Cardiac septum (tissue), 1 donor: ENCODE measurements at regions of chr17 and their contacts with region 1.

Region 1: DNA sequence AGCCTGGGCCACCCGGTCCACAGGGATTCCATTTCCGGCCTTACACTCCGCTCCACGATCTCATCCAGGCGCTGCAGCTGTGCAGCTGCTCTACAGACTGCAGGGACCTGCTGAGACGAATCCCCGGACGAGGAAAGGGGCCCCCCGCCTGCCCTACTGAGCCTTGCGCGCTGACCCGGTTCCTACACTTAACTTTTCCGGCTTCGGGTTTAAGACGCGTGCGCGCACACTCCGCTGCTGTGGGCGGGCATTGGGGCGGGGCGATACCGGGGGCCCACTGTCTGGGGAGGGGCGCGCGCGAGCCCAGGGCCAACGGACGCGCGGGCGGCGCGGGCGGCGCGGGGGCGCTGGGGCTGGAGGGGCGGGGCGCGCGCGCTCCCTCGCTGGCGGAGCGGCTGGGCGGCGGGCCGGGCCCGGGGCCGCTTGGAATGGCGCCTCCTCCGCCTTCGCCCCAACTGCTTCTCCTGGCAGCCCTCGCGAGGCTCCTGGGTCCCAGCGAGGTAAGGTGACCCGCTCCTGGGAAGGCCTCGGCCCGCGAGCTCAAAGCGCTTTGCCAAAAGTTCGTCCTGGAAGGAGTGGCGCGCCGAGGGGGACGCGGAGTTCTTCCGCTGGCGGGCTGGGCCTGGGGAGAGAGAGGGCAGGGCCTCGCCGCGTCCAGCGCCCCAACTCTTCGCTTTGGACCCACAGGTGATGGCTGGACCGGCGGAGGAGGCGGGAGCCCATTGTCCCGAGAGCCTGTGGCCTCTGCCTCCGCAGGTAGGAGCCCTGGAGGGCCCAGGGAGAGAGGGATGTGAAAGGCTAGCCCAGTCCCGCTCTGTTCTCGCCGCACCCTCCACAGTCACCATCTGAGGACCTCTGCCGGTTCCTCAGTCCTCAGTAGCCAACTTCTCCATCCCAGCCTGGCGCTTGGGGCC is at the start of gene TP53I13:
- DNase-seq: peak; percentile 93
- total RNA-seq, gene TP53I13: 31.9 TPM

Region 2: DNA sequence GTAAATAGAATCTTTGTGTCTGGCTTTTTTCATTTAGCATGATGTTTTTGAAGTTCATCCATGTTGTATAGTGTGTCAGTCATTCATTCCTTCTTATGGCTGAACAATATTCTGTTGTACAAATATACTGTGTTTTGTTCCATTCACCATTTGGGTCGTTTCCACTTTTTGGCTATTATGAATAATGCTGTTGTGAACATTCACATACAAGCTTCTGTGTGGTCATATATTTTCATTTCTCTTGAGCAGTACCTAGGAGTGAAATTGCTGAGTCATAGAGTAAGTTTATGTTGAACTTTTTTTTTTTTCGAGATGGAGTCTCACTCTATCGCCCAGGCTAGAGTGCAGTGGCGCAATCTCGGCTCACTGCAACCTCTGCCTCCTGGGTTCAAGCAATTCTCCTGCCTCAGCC is 210.8 kb before region 1 on chr17:
- intact Hi-C with region 1: no loop called
- DNase-seq: no peak

Region 3: DNA sequence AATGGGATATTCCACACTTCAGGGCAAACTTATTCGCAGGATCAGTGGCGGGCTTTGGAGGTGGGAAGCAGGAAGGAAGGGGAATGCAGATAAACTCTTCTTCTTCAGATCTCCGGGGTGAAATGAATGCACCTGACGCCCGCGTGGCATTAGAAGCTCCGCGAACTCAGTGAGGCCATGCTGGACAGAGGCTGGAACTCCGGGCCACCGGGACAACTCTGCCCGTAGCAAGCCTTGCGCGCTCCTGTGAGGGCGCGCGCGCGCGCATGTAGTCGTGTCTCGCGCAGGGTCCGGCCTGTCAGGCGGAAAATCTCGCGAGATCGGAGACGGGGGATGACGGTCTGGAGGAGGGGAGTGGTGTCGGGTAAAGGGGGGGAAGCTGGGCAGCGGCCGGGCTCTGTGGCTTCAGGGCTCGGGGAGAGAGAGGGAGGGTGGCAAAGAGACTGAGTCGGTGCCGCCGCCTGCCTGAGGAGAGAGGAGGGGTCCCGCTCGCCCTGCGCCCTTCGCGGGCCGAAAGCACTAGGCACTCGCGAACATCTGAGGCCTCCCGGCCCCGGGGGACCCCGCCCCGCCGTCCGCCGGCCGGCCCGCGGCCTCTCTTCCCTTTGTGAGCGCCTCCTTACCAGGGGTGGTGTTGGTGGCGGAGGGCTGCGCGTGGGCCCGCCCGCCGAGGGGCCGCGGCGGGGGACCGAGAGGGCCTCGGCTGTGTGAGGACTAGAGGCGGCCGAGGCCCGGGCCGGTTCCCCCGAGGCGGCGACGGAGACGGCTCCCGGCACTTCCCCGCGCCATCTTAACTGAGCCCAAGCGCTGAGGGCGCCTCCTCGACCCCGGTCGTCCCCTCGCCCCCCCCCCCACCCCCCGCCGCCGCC is 178.4 kb before region 1 on chr17 and contains the start of gene TAOK1:
- intact Hi-C with region 1: loop called (anchors 10 kb)
- DNase-seq: peak; percentile 100
- total RNA-seq, gene TAOK1: 64.8 TPM

Region 4: DNA sequence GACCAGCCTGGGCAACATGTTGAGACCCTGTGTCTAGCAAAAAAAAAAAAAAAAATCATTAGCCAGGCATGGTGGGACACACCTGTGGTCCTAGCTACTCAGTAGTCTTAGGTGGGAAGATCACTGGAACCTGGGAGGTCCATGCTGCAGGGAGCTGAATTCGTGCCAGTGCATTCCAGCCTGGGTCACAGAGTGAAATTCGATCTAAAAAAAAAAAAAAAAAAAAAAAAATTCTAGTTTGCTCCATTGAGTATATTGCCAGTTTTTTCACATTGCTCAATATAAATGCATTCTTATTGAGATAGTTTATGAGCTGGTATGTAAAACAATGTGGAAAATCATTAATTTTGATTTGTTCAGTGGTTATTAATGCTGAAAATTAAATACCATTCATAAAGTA is 53.8 kb before region 1 on chr17:
- intact Hi-C with region 1: no loop called
- DNase-seq: no peak

Region 5: DNA sequence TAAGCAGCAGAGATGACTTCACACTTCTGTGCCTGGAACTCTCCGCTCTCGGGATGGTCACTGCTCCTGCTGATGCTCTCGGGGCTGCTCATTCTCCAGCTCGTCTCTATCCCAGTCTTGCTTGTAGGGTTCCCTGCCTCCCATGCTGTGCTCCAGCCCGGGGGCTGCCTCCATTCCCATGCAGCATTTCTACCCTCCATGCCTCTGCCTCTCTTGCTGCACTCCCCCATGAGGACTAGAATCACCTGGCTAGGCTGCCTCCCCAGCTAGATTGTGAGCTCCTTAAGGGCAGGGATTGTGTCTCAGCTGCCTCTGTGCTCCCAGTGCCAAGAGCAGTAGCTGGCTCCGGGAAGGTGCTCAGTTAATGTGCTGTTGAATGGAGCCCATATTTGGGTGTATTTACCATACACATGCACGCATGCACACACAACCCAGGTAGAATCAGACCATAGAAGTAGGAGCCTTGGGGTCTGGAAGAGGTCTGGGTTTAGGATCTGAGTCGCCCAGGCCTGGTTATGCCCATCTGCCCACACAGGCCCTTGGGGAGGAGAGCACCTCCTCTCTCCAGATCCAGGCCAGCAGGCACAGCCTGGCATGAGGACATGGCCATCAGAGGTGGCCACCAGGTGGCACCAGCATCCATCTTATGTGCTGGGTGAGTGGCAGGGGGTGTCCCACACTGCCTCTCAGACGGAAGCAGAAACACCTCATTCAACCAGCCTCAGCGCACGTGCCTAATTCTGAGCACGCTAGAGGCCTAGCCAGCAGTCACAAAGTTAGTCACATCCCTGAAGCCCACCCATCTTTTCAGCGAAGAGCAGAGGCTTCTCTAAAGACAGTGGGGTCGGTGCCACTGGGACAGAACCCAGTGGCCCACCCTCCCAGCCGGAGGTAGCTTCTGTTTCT is 11.5 kb after region 1 on chr17:
- intact Hi-C with region 1: no loop called
- DNase-seq: peak; percentile 90